T-cell (primary cell): ENCODE measurements at regions of chr2 and their contacts with region 1.

Region 1: GRCh38 chr2:29115797-29116781 is 874 bp downstream of the CLIP4 start:
- DNase-seq: peak; percentile 13 to 85 (median 73)
- ATAC-seq: peak; percentile 55 to 69 (median 57)
- H3K4me3 ChIP-seq: peak overlapping the region; percentile 67 to 89
- H3K4me3 Mint-ChIP-seq: peak overlapping the region; percentile 90 to 96 (median 96)
- H3K27ac ChIP-seq: peak overlapping the region; percentile 87
- H3K27ac Mint-ChIP-seq: peak overlapping the region; percentile 83 to 97
- H3K4me1 ChIP-seq: peaks cover 14 to 19% of the 10 kb centered on the region in 2 experiments
- H3K4me1 Mint-ChIP-seq: peaks cover 56 to 59% (median 57%) of the 10 kb centered on the region in 3 donors
- H3K27me3 ChIP-seq: no peaks in the 10 kb centered on the region
- H3K27me3 Mint-ChIP-seq: no peaks in the 10 kb centered on the region

Region 2: GRCh38 chr2:29014811-29015421 is 101.2 kb before region 1 on chr2:
- CTCF ChIA-PET with region 1: interaction called in 1 of 2 experiments, 8 read pairs
- POLR2A ChIA-PET with region 1: interaction called, 5 to 10 read pairs
- DNase-seq: peak; percentile 62 to 85 (median 72)
- ATAC-seq: peak; percentile 68 to 84 (median 82)
- H3K4me3 ChIP-seq: peak overlapping the region in 1 of 2 donors; percentile 39
- H3K4me3 Mint-ChIP-seq: peak overlapping the region; percentile 68 to 80 (median 72)
- H3K27ac ChIP-seq: peak overlapping the region; percentile 96
- H3K27ac Mint-ChIP-seq: peak overlapping the region; percentile 98 to 100
- H3K4me1 ChIP-seq: peaks cover 62 to 84% of the 10 kb centered on the region in 2 experiments
- H3K4me1 Mint-ChIP-seq: peaks cover 70 to 77% (median 72%) of the 10 kb centered on the region in 3 donors
- H3K27me3 ChIP-seq: no peaks in the 10 kb centered on the region
- H3K27me3 Mint-ChIP-seq: no peaks in the 10 kb centered on the region

Region 3: DNA sequence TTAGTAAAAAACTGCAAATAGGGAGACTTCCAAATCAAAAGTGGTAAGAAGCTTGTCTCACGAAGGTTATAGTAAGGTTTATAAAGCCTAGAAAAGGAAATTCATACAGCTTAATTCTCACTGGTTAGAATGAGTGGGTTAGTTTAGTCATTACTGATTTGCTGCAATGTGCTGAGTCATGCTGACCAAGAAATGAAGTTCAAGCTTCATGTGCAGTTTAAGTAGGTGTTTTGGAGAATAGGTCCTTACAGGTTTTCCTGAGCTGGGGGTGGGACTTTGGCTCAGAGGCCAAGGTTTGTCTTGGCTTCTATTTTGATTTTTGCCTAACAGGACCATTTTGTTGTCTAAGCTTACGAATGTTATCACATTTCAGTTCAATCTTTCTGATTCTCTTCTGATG is 14.2 kb after region 1 on chr2:
- CTCF ChIA-PET with region 1: interaction called in 1 of 2 experiments, 10 read pairs
- POLR2A ChIA-PET with region 1: interaction called, 3 read pairs
- DNase-seq: no peak
- ATAC-seq: no peak
- H3K4me3 ChIP-seq: no peak overlapping the region
- H3K4me3 Mint-ChIP-seq: no peak overlapping the region
- H3K27ac ChIP-seq: no peak overlapping the region
- H3K27ac Mint-ChIP-seq: peak overlapping the region in 1 of 2 donors; percentile 34
- H3K4me1 ChIP-seq: no peaks in the 10 kb centered on the region
- H3K4me1 Mint-ChIP-seq: peaks cover 16 to 39% (median 22%) of the 10 kb centered on the region in 3 donors
- H3K27me3 ChIP-seq: no peaks in the 10 kb centered on the region
- H3K27me3 Mint-ChIP-seq: no peaks in the 10 kb centered on the region